Breast epithelium (tissue), 4 donors: ENCODE measurements at regions of chr15 and their contacts with region 1.

Region 1: DNA sequence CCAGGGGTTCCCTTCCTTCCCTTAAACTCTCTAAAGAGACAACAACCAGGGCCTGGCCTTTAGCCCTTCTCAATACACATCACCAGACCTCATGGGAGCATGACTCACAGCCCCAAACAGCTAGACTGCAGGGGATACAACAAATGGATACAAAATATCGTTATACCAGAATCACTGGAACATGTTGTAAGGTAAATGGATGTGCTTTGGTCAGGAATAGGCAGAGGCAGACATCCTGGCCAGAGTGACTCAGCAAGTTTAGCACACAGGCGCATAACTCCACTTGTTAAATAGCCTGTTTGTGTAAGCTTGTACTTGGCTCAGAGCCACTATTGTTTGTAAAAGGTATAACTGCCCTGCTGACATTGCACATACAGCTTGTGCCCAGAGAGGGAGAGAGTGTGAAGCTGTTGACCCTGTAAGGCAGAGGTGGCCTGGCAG is 18.3 kb downstream of the TMED3 start:
- DNase-seq: no peak
- H3K4me3 ChIP-seq: no peak overlapping the region
- H3K27ac ChIP-seq: no peak overlapping the region
- H3K4me1 ChIP-seq: no peaks in the 10 kb centered on the region
- H3K27me3 ChIP-seq: no peaks in the 10 kb centered on the region
- CTCF ChIP-seq: no peak
- POLR2A ChIP-seq: no peak

Region 2: DNA sequence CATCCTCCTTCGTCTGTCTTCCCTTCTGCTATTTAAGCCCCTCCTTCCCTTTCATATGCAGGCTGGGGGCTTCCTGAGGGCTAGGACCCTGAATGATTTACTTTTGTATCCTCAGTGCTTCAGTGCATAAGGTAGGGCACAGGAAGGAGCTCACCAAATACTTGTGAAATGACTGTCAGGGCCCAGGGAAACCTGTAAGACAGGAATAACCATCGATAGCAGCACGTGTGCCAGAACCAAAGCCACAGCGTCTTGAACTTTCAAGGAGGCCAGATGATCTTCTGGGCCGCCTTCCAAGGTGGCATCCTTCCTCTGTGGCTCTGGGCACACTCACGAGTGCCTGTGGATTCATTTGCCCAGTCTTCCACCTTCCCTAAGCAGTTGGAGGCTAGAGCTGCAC is 14.4 kb before region 1 on chr15:
- intact Hi-C with region 1: loop called (anchors 1 kb)
- DNase-seq: peak; percentile 88
- H3K4me3 ChIP-seq: no peak overlapping the region
- H3K27ac ChIP-seq: peak overlapping the region; percentile 74 to 87
- H3K4me1 ChIP-seq: peaks cover 0 to 6% of the 10 kb centered on the region in 2 donors
- H3K27me3 ChIP-seq: no peaks in the 10 kb centered on the region
- CTCF ChIP-seq: no peak
- POLR2A ChIP-seq: no peak

Region 3: DNA sequence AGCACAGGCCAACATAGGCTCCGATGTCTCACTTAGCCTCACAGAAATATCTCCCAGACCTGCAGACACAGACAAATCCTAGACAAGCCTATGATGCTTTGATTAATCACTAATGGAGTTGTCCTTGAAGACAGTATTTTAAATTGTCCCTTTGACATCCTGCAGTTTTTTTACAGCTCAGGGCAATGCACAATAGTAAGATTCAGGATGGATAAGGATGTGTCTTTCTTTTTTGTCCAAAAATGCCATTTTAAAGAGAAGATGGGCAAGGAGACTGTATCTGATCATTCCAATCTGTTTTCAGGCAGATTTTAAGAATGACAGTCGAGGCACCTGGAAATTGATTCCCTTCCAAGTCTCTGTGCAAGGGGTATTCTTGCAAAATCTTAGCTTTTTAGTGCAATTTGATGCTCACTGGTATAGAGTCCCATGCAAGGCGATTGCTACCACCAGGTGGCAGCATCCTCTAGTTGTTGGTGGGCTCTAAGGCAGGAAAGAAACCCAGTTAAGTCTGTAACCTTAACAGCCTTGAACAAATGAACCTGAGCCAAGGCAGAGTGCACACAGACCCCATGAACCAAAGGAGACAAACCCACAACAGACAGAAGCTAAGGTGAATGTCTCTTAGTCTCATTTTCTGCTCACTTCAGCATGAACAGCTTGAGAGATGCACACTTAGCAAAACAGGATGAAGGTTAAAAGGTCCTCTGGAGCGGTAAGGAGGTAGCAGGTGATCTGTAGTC is 51.7 kb after region 1 on chr15:
- intact Hi-C with region 1: no loop called
- DNase-seq: peak; percentile 57 to 67
- H3K4me3 ChIP-seq: no peak overlapping the region
- H3K27ac ChIP-seq: no peak overlapping the region
- H3K4me1 ChIP-seq: no peaks in the 10 kb centered on the region
- H3K27me3 ChIP-seq: no peaks in the 10 kb centered on the region
- CTCF ChIP-seq: peak; percentile 59 to 84 (median 72)
- POLR2A ChIP-seq: no peak